Panc1 (cell line): ENCODE measurements at regions of chr21 and their contacts with region 1.

Region 1: DNA sequence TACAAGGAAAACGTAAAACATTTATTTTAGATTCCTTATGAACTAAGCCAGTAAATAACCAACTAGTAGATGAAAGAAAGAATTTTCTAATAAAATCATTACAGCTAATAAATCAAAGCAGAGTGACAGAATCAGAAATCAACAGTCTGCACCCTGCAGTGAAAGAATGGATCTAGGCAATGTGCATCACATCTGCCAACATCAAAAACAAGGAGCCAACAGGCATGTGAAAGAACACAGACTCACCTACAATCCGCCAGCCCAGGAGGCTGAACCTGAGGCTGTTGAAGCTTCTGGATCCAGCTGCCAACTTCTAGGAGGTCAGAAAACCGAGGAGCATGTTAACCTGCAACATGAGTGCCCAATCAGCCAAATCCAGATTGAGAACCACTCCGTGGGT is 196.3 kb downstream of the SETD4 start:
- DNase-seq: no peak
- ATAC-seq: no peak
- H3K4me3 ChIP-seq: no peak overlapping the region
- H3K27ac ChIP-seq: no peak overlapping the region
- H3K4me1 ChIP-seq: no peaks in the 10 kb centered on the region
- H3K27me3 ChIP-seq: peaks cover 4% of the 10 kb centered on the region; the same call in 1 of the 2 replicates
- CTCF ChIP-seq: no peak

Region 2: DNA sequence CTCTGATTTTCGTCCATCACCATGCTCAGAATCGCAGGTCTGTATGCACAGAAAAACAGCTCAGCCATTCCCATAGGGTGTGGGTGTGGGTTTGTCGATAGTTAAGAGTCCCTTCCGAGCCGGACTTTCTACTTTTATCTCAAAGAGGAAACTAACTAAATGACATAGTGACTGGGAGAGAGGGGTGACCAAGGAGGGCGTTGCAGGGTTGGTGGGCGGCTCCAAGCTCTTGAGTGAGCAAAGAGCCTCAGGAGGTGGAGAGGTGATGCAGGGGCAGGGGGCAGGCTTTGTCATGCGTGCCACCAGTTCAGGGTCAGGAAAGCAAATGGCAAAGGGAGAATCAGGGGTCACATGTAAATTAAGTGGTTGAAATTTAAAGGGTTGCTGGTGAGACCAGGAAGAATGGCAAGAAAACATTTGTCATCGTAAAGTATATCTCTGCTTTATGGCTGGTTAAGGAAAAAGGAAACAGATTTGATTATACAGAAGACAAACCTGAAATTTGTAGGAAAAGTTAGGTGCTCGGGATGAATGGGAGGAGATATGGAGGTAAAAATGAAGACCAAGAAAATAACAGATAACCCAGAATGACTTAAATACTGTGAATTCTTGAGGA is 52.7 kb before region 1 on chr21:
- CTCF ChIA-PET with region 1: no interaction called
- POLR2A ChIA-PET with region 1: interaction called, 14 read pairs
- in situ Hi-C with region 1: no loop called
- intact Hi-C with region 1: no loop called
- DNase-seq: no peak
- ATAC-seq: no peak
- H3K4me3 ChIP-seq: no peak overlapping the region
- H3K27ac ChIP-seq: no peak overlapping the region
- H3K4me1 ChIP-seq: no peaks in the 10 kb centered on the region
- H3K27me3 ChIP-seq: no peaks in the 10 kb centered on the region
- CTCF ChIP-seq: no peak

Region 3: GRCh38 chr21:35909456-35910223 is 45.6 kb after region 1 on chr21:
- CTCF ChIA-PET with region 1: no interaction called
- POLR2A ChIA-PET with region 1: no interaction called
- in situ Hi-C with region 1: no loop called
- intact Hi-C with region 1: no loop called
- DNase-seq: no peak
- ATAC-seq: no peak
- H3K4me3 ChIP-seq: no peak overlapping the region
- H3K27ac ChIP-seq: no peak overlapping the region
- H3K4me1 ChIP-seq: no peaks in the 10 kb centered on the region
- H3K27me3 ChIP-seq: no peaks in the 10 kb centered on the region
- CTCF ChIP-seq: no peak